Activated naive CD4-positive, alpha-beta T cell treated with anti-CD3 and anti-CD28 coated beads for 36 hours (primary cell): ENCODE measurements at regions of chr6 and their contacts with region 1.

Region 1: GRCh38 chr6:70667711-70668498 is at the start of gene SMAP1:
- DNase-seq: peak; percentile 94
- H3K4me3 Mint-ChIP-seq: peak within 1 kb of the TSS; percentile 90
- H3K27ac Mint-ChIP-seq: peak within 1 kb of the TSS; percentile 93
- H3K4me1 Mint-ChIP-seq: peaks cover 52% of the 10 kb centered on the region
- H3K27me3 Mint-ChIP-seq: no peaks in the 10 kb centered on the region
- total RNA-seq, gene SMAP1: 15.8 to 16.1 TPM

Region 2: GRCh38 chr6:70413114-70413991 is 254.6 kb before region 1 on chr6 and contains the start of gene FAM135A:
- CTCF ChIA-PET with region 1: interaction called, 3 read pairs
- intact Hi-C with region 1: loop called (anchors 1 kb)
- DNase-seq: peak; percentile 99
- H3K4me3 Mint-ChIP-seq: peak within 1 kb of the TSS; percentile 99
- H3K27ac Mint-ChIP-seq: peak within 1 kb of the TSS; percentile 84
- H3K4me1 Mint-ChIP-seq: peaks cover 16% of the 10 kb centered on the region
- H3K27me3 Mint-ChIP-seq: no peaks in the 10 kb centered on the region
- total RNA-seq, gene FAM135A: 11.5 to 11.9 TPM

Region 3: DNA sequence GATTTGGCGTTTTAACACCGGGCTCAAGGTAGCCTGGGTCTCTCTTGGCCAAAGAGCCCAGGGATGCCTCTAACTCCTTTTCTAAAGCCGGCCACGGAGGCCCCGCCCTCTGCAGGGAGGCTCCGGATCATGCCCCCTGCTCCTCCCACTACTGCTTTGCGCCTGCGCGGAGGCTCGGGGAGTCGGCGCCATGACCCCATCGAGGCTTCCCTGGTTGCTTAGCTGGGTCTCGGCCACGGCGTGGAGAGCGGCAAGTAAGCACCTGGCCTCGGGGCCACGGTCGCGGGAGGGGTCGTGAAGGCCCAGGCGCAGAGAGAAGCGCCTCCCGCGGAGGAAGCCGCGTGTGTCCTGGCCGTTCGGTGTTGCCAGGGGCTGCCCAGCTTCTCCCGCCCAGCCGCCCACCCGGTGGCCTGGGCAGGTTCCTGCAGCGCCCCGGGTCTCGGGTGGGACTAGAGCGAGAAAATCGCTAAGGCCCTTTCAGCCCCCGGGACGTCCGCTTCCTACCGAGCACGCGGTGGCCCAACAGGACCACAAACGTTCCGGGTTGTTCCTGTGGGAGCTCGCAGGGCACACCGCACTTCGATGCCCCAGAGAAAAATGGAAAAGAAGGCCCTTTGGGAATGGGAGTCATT is 101.0 kb before region 1 on chr6 and contains the start of gene SDHAF4:
- CTCF ChIA-PET with region 1: interaction called, 3 read pairs
- intact Hi-C with region 1: loop called (anchors 1 kb)
- DNase-seq: peak; percentile 95
- H3K4me3 Mint-ChIP-seq: peak within 1 kb of the TSS; percentile 83
- H3K27ac Mint-ChIP-seq: peak within 1 kb of the TSS; percentile 83
- H3K4me1 Mint-ChIP-seq: peaks cover 11% of the 10 kb centered on the region
- H3K27me3 Mint-ChIP-seq: no peaks in the 10 kb centered on the region
- total RNA-seq, gene SDHAF4: 16.8 to 17.9 TPM

Region 4: GRCh38 chr6:70651326-70651905 is 16.5 kb before region 1 on chr6:
- CTCF ChIA-PET with region 1: interaction called, 6 read pairs
- intact Hi-C with region 1: loop called (anchors 1 kb)
- DNase-seq: peak; percentile 78
- H3K4me3 Mint-ChIP-seq: no peak overlapping the region
- H3K27ac Mint-ChIP-seq: no peak overlapping the region
- H3K4me1 Mint-ChIP-seq: peaks cover 23% of the 10 kb centered on the region
- H3K27me3 Mint-ChIP-seq: no peaks in the 10 kb centered on the region

Region 5: DNA sequence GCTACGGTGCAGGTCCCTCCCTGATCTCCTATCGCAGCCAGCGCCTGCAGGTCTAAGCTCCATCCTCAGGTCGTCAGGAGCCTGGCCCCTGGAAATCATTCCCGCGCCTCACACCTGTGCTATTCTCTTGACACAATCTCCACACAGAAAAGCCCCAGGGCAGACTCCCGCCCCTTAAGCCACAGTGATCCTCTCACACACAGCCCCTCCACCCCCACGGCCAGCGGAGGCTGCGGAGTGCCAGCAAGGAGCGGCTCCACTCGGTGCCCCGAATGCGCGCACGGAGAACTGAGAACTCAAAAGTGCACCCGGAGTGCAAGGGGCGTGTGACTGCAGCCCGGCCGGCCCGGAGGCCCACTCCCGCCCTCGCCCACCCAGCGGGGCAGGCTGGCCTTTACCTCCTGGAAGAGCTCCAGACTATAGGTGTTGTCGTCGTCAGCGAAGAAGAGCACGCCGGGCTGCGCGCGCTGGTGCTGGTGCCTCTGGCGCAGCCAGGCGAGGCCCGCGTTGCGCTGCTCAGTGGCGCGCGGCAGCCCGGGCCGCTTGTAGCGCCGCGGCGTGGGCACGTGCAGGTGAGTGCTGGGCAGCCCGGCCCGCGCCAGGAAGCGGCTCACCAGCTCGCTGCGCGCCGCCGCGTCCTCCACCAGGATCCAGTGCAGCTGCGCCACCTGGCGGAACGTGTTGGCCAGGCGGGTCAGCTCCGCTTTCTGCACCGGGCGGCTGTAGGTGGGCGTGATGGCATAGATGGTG is 287.7 kb after region 1 on chr6:
- CTCF ChIA-PET with region 1: no interaction called
- intact Hi-C with region 1: no loop called
- DNase-seq: peak; percentile 93
- H3K4me3 Mint-ChIP-seq: peak overlapping the region; percentile 74
- H3K27ac Mint-ChIP-seq: no peak overlapping the region
- H3K4me1 Mint-ChIP-seq: peaks cover 4% of the 10 kb centered on the region
- H3K27me3 Mint-ChIP-seq: peaks cover 49% of the 10 kb centered on the region

Region 6: DNA sequence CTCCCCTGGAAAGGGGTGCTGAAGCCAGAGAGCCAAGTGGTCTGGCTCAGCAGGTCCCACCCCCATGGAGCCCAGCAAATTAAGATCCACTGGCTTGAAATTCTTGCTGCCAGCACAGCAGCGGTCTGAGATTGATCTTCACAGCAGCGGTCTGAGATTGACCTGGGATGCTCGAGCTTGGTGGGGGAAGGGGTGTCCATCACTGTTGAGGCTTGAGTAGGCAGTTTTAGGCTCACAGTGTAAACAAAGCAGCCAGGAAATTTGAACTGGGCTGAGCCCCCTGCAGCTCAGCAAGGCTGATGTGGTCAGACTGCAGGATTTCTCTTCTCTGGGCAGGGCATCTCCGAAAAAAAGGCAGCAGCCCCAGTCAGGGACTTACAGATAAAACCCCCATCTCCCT is 330.2 kb after region 1 on chr6:
- CTCF ChIA-PET with region 1: no interaction called
- intact Hi-C with region 1: no loop called
- DNase-seq: no peak
- H3K4me3 Mint-ChIP-seq: no peak overlapping the region
- H3K27ac Mint-ChIP-seq: no peak overlapping the region
- H3K4me1 Mint-ChIP-seq: no peaks in the 10 kb centered on the region
- H3K27me3 Mint-ChIP-seq: peaks cover 14% of the 10 kb centered on the region

Region 7: GRCh38 chr6:71288228-71289001 is 620.5 kb after region 1 on chr6 and contains the start of gene OGFRL1:
- CTCF ChIA-PET with region 1: no interaction called
- intact Hi-C with region 1: loop called (anchors 5 kb)
- DNase-seq: peak; percentile 63
- H3K4me3 Mint-ChIP-seq: peak within 1 kb of the TSS; percentile 72
- H3K27ac Mint-ChIP-seq: peak within 1 kb of the TSS; percentile 31
- H3K4me1 Mint-ChIP-seq: peaks cover 22% of the 10 kb centered on the region
- H3K27me3 Mint-ChIP-seq: peaks cover 7% of the 10 kb centered on the region
- total RNA-seq, gene OGFRL1: 2.6 to 3.1 TPM